ENCODE measurements at regions of chr1 and their contacts with region 1.

Region 1: GRCh38 chr1:170494369-170494768 is 37.6 kb upstream of the GORAB start:
- DNase-seq: peak; percentile 99
- H3K4me3 ChIP-seq: no peak overlapping the region
- H3K27ac ChIP-seq: no peak overlapping the region
- H3K4me1 ChIP-seq: peaks cover 17% of the 10 kb centered on the region
- H3K27me3 ChIP-seq: peaks cover 83% of the 10 kb centered on the region
- CTCF ChIP-seq: no peak

Region 2: GRCh38 chr1:170010443-170010842 is 483.9 kb before region 1 on chr1:
- CTCF ChIA-PET with region 1: no interaction called
- POLR2A ChIA-PET with region 1: no interaction called
- intact Hi-C with region 1: loop called (anchors 10 kb)
- DNase-seq: peak; percentile 79
- H3K4me3 ChIP-seq: no peak overlapping the region
- H3K27ac ChIP-seq: no peak overlapping the region
- H3K4me1 ChIP-seq: no peaks in the 10 kb centered on the region
- H3K27me3 ChIP-seq: no peaks in the 10 kb centered on the region
- CTCF ChIP-seq: peak; percentile 69

Region 3: DNA sequence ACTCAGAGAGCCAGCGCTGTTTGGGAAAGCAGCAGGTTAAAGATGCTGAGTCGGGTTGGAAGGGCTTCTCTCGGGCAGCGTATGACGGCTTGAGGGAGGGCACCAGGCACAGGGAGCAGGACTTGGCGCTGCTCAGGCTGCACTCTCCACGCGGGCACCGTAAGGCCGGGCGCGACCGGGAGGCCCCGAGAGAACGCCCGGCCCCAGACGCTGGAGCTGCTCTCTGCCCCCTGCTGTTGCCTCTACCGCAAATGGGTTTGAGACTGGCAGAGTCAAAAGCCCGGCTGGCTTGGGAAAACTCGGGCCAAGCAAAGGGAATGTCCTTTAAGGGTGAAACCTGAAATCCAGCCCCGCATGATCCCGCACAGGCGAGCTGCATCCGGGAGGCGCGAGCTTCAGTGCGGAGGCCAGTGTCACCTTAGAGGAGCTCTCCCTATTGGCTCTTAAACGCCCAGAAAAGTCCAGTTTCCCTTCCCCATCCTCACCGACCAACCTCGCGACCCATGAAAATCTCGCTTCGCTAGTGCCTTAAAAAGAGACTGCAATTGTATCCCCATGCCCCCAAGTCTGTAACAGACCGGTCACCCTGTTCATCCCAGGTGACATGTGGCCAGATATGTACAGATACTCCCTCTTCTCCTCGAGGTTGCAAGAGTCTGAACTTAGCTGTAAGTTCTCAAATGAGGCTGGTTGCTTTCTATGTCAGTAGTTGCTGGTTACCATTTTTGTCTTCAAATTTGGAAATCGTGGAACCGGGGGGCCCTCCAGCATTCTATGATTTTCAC is 170.7 kb after region 1 on chr1:
- CTCF ChIA-PET with region 1: no interaction called
- POLR2A ChIA-PET with region 1: no interaction called
- intact Hi-C with region 1: loop called (anchors 2 kb)
- DNase-seq: no peak
- H3K4me3 ChIP-seq: peak overlapping the region; percentile 44
- H3K27ac ChIP-seq: no peak overlapping the region
- H3K4me1 ChIP-seq: peaks cover 15% of the 10 kb centered on the region
- H3K27me3 ChIP-seq: peaks cover 78% of the 10 kb centered on the region
- CTCF ChIP-seq: 0 out of 2 replicates have a peak, but pooled peaks have one; percentile 16

Region 4: GRCh38 chr1:170714163-170714562 is 219.8 kb after region 1 on chr1:
- CTCF ChIA-PET with region 1: no interaction called
- POLR2A ChIA-PET with region 1: no interaction called
- intact Hi-C with region 1: loop called (anchors 2 kb)
- DNase-seq: peak; percentile 91
- H3K4me3 ChIP-seq: no peak overlapping the region
- H3K27ac ChIP-seq: no peak overlapping the region
- H3K4me1 ChIP-seq: peaks cover 20% of the 10 kb centered on the region
- H3K27me3 ChIP-seq: peaks cover 57% of the 10 kb centered on the region
- CTCF ChIP-seq: no peak

Region 5: DNA sequence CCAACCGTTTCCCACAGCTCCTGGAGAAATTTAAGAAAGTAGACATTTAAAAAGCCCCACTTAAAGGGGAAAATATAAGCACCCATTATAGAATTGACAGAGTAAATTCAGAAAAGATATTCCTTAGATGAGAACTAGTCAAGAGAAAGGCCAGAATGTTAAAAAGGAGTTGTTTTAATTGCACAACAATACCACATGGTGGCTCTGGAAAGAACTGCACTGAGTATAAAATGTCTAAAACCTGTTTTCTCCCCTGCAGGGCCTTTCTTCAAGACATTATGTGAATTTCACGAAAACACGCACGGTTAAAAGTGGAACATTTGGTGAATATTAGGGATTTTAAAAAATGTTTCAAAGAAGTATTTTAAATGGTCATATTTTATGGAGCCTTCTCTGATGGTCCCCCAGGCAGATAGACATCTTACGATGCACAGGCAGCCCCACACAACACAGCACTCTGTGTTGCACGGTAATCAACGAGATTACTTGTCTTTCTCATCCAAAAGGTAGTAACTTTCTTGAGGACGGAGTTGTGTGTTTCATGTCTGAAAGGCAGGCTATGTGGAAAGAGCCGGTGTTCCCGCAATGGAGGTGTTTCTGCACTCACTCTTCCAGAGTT is 271.5 kb after region 1 on chr1:
- CTCF ChIA-PET with region 1: no interaction called
- POLR2A ChIA-PET with region 1: no interaction called
- intact Hi-C with region 1: loop called (anchors 5 kb)
- DNase-seq: peak; percentile 48
- H3K4me3 ChIP-seq: no peak overlapping the region
- H3K27ac ChIP-seq: no peak overlapping the region
- H3K4me1 ChIP-seq: no peaks in the 10 kb centered on the region
- H3K27me3 ChIP-seq: no peaks in the 10 kb centered on the region
- CTCF ChIP-seq: peak; percentile 67